ENCODE measurements at regions of chr5 and their contacts with region 1.

Region 1: GRCh38 chr5:61177070-61177469 is 14.8 kb upstream of the SMIM15 start:
- DNase-seq: no peak
- H3K4me3 ChIP-seq: no peak overlapping the region
- H3K27ac ChIP-seq: no peak overlapping the region
- H3K4me1 ChIP-seq: peaks cover 0 to 12% (median 2%) of the 10 kb centered on the region in 4 experiments
- H3K27me3 ChIP-seq: no peaks in the 10 kb centered on the region

Region 2: GRCh38 chr5:61162010-61162831 is 14.8 kb before region 1 on chr5 and contains the start of gene SMIM15:
- CTCF ChIA-PET with region 1: interaction called, 11 read pairs
- POLR2A ChIA-PET with region 1: no interaction called
- DNase-seq: peak; percentile 81 to 90 (median 86)
- H3K4me3 ChIP-seq: peak within 1 kb of the TSS; percentile 69 to 97 (median 90)
- H3K27ac ChIP-seq: peak within 1 kb of the TSS; percentile 58 to 86
- H3K4me1 ChIP-seq: peaks cover 7 to 24% (median 15%) of the 10 kb centered on the region in 4 experiments
- H3K27me3 ChIP-seq: no peaks in the 10 kb centered on the region

Region 3: GRCh38 chr5:61200582-61201155 is 23.6 kb after region 1 on chr5:
- CTCF ChIA-PET with region 1: no interaction called
- POLR2A ChIA-PET with region 1: no interaction called
- DNase-seq: no peak
- H3K4me3 ChIP-seq: no peak overlapping the region
- H3K27ac ChIP-seq: no peak overlapping the region
- H3K4me1 ChIP-seq: no peaks in the 10 kb centered on the region
- H3K27me3 ChIP-seq: no peaks in the 10 kb centered on the region

Measured in common myeloid progenitor, CD34-positive (primary cell).